ENCODE measurements at regions of chr5 and their contacts with region 1.

Region 1: GRCh38 chr5:111757355-111758283 is 625 bp upstream of the NREP start:
- DNase-seq: peak; percentile 82
- H3K4me3 Mint-ChIP-seq: peak overlapping the region; percentile 77
- H3K27ac Mint-ChIP-seq: peak overlapping the region; percentile 60
- H3K4me1 Mint-ChIP-seq: peaks cover 10% of the 10 kb centered on the region
- H3K27me3 Mint-ChIP-seq: peaks cover 26% of the 10 kb centered on the region

Region 2: GRCh38 chr5:111092062-111092853 is 665.4 kb before region 1 on chr5 and contains the start of gene WDR36:
- CTCF ChIA-PET with region 1: no interaction called
- POLR2A ChIA-PET with region 1: no interaction called
- intact Hi-C with region 1: loop called (anchors 5 kb)
- DNase-seq: peak; percentile 93
- H3K4me3 Mint-ChIP-seq: peak within 1 kb of the TSS; percentile 92
- H3K27ac Mint-ChIP-seq: peak within 1 kb of the TSS; percentile 94
- H3K4me1 Mint-ChIP-seq: peaks cover 38% of the 10 kb centered on the region
- H3K27me3 Mint-ChIP-seq: peaks cover 3% of the 10 kb centered on the region
- total RNA-seq, gene WDR36: 43.5 to 44.1 TPM

Region 3: DNA sequence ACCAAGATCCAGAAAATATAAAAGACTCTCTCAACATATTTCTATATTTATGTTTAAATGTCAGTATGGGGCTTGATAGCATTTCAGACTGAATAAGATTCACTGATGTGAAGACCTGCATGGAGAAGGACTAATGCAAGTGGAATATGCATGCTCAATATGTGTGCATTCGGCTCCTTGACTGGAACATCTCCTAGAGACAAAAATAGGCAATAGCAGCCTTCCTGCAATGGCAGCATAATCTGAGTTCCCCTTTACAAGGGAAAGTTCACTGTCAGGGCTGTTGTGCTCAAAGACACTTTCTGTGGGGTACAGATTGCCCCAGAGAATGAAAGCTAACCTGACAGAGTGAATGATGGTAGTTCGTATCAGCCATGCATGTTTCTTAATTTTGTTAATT is 287.7 kb before region 1 on chr5:
- CTCF ChIA-PET with region 1: no interaction called
- POLR2A ChIA-PET with region 1: no interaction called
- intact Hi-C with region 1: no loop called
- DNase-seq: no peak
- H3K4me3 Mint-ChIP-seq: no peak overlapping the region
- H3K27ac Mint-ChIP-seq: no peak overlapping the region
- H3K4me1 Mint-ChIP-seq: no peaks in the 10 kb centered on the region
- H3K27me3 Mint-ChIP-seq: no peaks in the 10 kb centered on the region

Region 4: DNA sequence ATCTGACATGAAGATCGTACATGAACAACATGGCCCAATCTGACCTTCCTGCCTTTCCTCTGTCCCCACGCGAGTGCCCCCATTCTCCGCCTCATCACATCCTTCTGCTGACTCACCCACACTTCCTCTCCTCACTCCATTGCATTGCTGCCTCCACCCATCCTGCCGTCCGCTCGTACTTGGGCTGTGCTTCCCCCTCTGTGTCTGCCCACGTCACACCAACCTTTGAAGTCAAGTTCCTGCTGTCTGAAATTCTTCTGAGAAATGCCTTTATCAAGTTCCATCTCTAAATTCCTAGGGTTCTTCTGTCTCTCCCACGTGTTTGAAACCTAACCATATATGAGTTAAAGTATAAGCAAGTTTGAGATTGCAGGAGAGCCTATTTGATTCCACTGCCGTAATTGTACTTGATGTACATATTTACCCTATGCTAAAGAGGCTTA is 227.3 kb before region 1 on chr5:
- CTCF ChIA-PET with region 1: interaction called, 3 read pairs
- POLR2A ChIA-PET with region 1: interaction called, 3 read pairs
- intact Hi-C with region 1: loop called (anchors 5 kb)
- DNase-seq: peak; percentile 88
- H3K4me3 Mint-ChIP-seq: peak overlapping the region; percentile 54
- H3K27ac Mint-ChIP-seq: peak overlapping the region; percentile 85
- H3K4me1 Mint-ChIP-seq: peaks cover 17% of the 10 kb centered on the region
- H3K27me3 Mint-ChIP-seq: no peaks in the 10 kb centered on the region

Region 5: GRCh38 chr5:111550279-111551020 is 207.2 kb before region 1 on chr5:
- CTCF ChIA-PET with region 1: interaction called, 4 read pairs
- POLR2A ChIA-PET with region 1: no interaction called
- intact Hi-C with region 1: loop called (anchors 1 kb)
- DNase-seq: peak; percentile 76
- H3K4me3 Mint-ChIP-seq: no peak overlapping the region
- H3K27ac Mint-ChIP-seq: no peak overlapping the region
- H3K4me1 Mint-ChIP-seq: peaks cover 18% of the 10 kb centered on the region
- H3K27me3 Mint-ChIP-seq: peaks cover 1% of the 10 kb centered on the region

Region 6: DNA sequence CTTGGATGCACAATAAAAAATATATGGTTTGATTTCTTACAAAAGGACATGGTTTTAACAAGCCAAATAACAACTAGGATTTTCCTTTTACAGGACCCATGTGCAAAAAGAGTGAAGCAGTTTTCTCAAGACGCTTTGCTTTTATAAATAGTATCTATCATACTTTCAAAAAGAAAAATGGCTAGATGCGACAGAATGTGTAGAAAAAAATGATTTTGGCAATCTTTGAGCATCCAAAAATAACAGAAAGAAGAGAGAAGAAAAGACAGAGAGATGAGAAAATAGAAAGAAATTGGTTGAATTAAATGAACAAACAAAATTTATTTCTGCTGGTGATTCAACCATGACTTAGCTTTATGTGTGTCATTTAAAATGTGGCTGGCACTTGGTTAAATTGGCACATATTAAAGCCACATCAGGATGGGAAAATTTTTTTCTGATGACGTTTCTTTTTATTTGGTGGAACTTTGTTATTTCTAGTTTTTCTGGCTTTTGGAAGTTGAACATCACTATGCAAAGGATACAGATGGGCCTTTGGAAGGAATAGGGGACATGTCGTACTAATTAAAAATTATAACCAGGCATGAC is 34.9 kb after region 1 on chr5:
- CTCF ChIA-PET with region 1: no interaction called
- POLR2A ChIA-PET with region 1: no interaction called
- intact Hi-C with region 1: no loop called
- DNase-seq: no peak
- H3K4me3 Mint-ChIP-seq: no peak overlapping the region
- H3K27ac Mint-ChIP-seq: no peak overlapping the region
- H3K4me1 Mint-ChIP-seq: no peaks in the 10 kb centered on the region
- H3K27me3 Mint-ChIP-seq: no peaks in the 10 kb centered on the region

Region 7: GRCh38 chr5:112146323-112147226 is 389.0 kb after region 1 on chr5:
- CTCF ChIA-PET with region 1: no interaction called
- POLR2A ChIA-PET with region 1: no interaction called
- intact Hi-C with region 1: loop called (anchors 5 kb)
- DNase-seq: peak; percentile 64
- H3K4me3 Mint-ChIP-seq: no peak overlapping the region
- H3K27ac Mint-ChIP-seq: peak overlapping the region; percentile 45
- H3K4me1 Mint-ChIP-seq: no peaks in the 10 kb centered on the region
- H3K27me3 Mint-ChIP-seq: peaks cover 9% of the 10 kb centered on the region

Region 8: DNA sequence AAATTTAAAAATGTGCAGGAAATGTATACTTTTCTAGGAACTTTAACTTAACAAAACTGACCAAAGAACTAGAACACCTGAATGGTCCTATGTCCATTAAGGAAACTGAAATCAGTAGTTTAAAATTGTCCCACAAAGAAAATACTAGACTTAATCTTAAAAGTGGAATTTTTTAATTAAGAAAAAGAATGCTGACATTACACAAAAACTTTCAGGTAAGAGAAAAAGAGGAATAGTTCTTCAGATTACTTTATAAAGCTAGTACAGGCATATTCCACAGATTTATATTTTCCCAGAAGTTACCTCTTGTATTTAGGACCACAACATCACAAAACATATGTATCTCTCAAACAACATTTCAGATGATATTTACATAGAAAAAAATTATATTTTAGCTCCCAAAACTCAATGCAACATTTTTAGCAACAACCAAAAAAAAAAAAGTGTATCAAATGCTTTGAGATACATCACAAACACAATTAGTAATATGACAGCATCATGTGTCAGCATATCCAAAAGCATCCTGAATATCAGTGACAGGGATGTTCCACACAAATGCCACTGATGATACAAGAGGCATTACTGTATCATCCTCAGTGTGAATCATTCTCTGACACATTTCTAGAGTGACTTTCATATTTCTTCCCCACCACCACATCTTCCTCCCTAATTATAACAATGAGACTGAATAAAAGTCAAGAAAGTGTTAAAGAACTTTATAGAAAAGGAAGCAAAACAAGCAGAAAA is 397.5 kb after region 1 on chr5:
- CTCF ChIA-PET with region 1: no interaction called
- POLR2A ChIA-PET with region 1: no interaction called
- intact Hi-C with region 1: loop called (anchors 1 kb)
- DNase-seq: no peak
- H3K4me3 Mint-ChIP-seq: no peak overlapping the region
- H3K27ac Mint-ChIP-seq: no peak overlapping the region
- H3K4me1 Mint-ChIP-seq: peaks cover 8% of the 10 kb centered on the region
- H3K27me3 Mint-ChIP-seq: peaks cover 2% of the 10 kb centered on the region

Region 9: DNA sequence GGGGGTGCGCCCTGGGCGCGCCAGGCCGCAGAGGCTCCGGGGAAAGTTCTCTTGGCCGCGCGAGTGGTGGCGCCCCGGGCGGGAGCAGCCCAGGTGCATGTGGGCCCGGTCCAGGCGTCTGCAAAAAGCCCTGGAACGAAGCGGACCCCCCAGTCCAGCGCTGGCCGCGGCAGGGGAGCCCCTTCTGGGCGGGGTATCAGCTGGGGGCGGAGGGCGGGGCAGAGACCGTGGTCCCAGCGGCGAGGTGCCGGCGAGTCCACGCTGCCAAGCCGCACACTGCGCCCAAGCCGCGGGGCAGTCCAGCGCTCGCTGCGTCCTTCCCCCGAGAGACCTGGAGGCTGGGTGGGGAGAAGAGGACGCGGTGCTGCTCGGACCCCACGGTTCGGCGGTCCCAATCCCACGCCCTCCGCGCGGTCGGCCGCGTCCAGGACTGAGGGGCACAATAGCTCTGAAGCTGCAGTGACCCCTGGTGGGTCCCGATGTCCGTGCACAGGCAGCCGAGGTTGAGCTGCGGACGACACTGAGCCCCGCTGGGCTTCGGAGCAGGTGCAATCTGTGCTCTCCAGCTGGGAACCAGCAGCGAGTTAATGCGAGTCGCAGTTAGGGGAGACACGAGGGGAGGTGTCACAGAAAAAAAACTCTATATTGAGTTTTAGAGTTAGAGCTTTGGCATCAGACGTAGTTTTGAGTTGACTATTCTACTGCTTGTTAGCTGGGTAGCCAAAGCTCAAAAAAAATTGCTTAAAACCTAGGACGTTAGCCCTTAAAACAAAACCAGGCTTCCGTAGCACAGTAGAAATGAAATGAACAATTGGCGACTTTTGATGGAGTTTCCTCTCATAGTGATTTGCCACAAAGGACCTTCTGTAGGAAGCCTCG is 662.6 kb after region 1 on chr5:
- CTCF ChIA-PET with region 1: no interaction called
- POLR2A ChIA-PET with region 1: no interaction called
- intact Hi-C with region 1: loop called (anchors 2 kb)
- DNase-seq: peak; percentile 67
- H3K4me3 Mint-ChIP-seq: peak overlapping the region; percentile 61
- H3K27ac Mint-ChIP-seq: no peak overlapping the region
- H3K4me1 Mint-ChIP-seq: peaks cover 10% of the 10 kb centered on the region
- H3K27me3 Mint-ChIP-seq: peaks cover 40% of the 10 kb centered on the region